ENCODE measurements at regions of chr14 and their contacts with region 1.

Region 1: GRCh38 chr14:68780358-68781160 is 12.3 kb downstream of the ZFP36L1 start:
- DNase-seq: peak in 5 of 9 donors; percentile 26 to 39 (median 33)
- ATAC-seq: peak; percentile 31
- H3K4me3 ChIP-seq: peak overlapping the region; percentile 57
- H3K4me3 Mint-ChIP-seq: peak overlapping the region; percentile 74 to 87 (median 84)
- H3K27ac ChIP-seq: peak overlapping the region; percentile 65
- H3K27ac Mint-ChIP-seq: peak overlapping the region; percentile 82 to 94 (median 92)
- H3K4me1 ChIP-seq: peaks cover 62 to 68% of the 10 kb centered on the region in 2 donors
- H3K4me1 Mint-ChIP-seq: peaks cover 39 to 90% (median 82%) of the 10 kb centered on the region in 7 donors
- H3K27me3 ChIP-seq: no peaks in the 10 kb centered on the region
- H3K27me3 Mint-ChIP-seq: no peaks in the 10 kb centered on the region

Region 2: GRCh38 chr14:68261092-68261842 is 519.3 kb before region 1 on chr14:
- CTCF ChIA-PET with region 1: interaction called, 219 read pairs
- POLR2A ChIA-PET with region 1: interaction called, 203 read pairs
- intact Hi-C with region 1: no loop called
- DNase-seq: peak in 4 of 9 donors; percentile 23 to 32 (median 29)
- ATAC-seq: peak; percentile 41
- H3K4me3 ChIP-seq: peak overlapping the region; percentile 10
- H3K4me3 Mint-ChIP-seq: peak overlapping the region in 9 of 10 donors; percentile 59 to 83 (median 75)
- H3K27ac ChIP-seq: peak overlapping the region; percentile 64
- H3K27ac Mint-ChIP-seq: peak overlapping the region; percentile 73 to 99 (median 92)
- H3K4me1 ChIP-seq: peaks cover 0 to 49% of the 10 kb centered on the region in 2 donors
- H3K4me1 Mint-ChIP-seq: peaks cover 41 to 85% (median 80%) of the 10 kb centered on the region in 7 donors
- H3K27me3 ChIP-seq: no peaks in the 10 kb centered on the region
- H3K27me3 Mint-ChIP-seq: no peaks in the 10 kb centered on the region

Region 3: GRCh38 chr14:68377459-68377858 is 403.1 kb before region 1 on chr14:
- CTCF ChIA-PET with region 1: no interaction called
- POLR2A ChIA-PET with region 1: interaction called, 14 read pairs
- intact Hi-C with region 1: no loop called
- DNase-seq: no peak
- ATAC-seq: peak; percentile 62
- H3K4me3 ChIP-seq: no peak overlapping the region
- H3K4me3 Mint-ChIP-seq: peak overlapping the region in 7 of 10 donors; percentile 29 to 72 (median 59)
- H3K27ac ChIP-seq: peak overlapping the region; percentile 37
- H3K27ac Mint-ChIP-seq: peak overlapping the region in 7 of 9 donors; percentile 69 to 89 (median 81)
- H3K4me1 ChIP-seq: peaks cover 0 to 38% of the 10 kb centered on the region in 2 donors
- H3K4me1 Mint-ChIP-seq: peaks cover 30 to 84% (median 72%) of the 10 kb centered on the region in 7 donors
- H3K27me3 ChIP-seq: no peaks in the 10 kb centered on the region
- H3K27me3 Mint-ChIP-seq: no peaks in the 10 kb centered on the region

Region 4: GRCh38 chr14:68482772-68483395 is 297.7 kb before region 1 on chr14:
- CTCF ChIA-PET with region 1: interaction called, 3 read pairs
- POLR2A ChIA-PET with region 1: no interaction called
- intact Hi-C with region 1: loop called (anchors 5 kb)
- DNase-seq: no peak
- ATAC-seq: no peak
- H3K4me3 ChIP-seq: no peak overlapping the region
- H3K4me3 Mint-ChIP-seq: peak overlapping the region in 9 of 10 donors; percentile 28 to 85 (median 39)
- H3K27ac ChIP-seq: no peak overlapping the region
- H3K27ac Mint-ChIP-seq: peak overlapping the region in 8 of 9 donors; percentile 71 to 96 (median 92)
- H3K4me1 ChIP-seq: peaks cover 22 to 48% of the 10 kb centered on the region in 2 donors
- H3K4me1 Mint-ChIP-seq: peaks cover 37 to 84% (median 79%) of the 10 kb centered on the region in 7 donors
- H3K27me3 ChIP-seq: no peaks in the 10 kb centered on the region
- H3K27me3 Mint-ChIP-seq: no peaks in the 10 kb centered on the region

Region 5: DNA sequence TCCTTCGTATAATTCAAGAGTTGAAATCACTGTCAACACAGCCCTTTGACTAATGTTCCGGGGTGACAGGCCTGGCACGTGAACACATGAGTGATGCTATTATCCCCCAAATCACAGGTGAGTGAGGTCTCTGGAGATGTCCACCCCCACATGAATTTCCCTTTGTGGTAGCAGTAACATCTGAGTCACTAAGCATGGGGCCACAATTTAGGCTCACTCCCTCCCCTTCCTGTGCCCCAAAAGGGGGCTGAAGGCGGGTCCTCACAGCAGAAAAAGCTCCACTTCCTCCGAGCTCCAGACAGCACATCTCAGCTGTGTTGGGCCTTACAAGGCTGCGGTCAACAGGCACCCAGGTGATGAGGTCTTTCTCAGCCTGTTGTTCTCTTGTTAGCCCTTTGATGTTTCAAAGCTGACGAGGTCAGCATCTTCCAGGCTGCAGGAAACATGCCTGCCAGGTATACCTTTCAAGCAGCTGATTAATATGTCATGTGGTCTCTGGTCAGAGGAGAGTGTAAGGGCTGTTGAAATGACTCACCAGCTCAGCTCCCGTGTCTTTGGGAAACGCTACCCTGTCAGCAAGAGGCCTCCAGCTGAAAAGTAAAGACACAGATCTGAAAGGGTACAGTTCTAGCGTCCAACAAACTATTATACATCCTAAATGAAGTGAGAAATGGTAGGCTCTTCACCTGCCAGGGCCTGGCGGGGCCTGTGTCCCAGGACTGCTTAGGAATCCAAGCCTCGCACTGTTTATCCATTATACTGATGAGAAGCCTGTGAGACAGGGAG is 94.9 kb before region 1 on chr14:
- CTCF ChIA-PET with region 1: interaction called, 3 read pairs
- POLR2A ChIA-PET with region 1: interaction called, 35 read pairs
- intact Hi-C with region 1: loop called (anchors 1 to 2 kb)
- DNase-seq: peak; percentile 31 to 74 (median 64)
- ATAC-seq: peak; percentile 91
- H3K4me3 ChIP-seq: no peak overlapping the region
- H3K4me3 Mint-ChIP-seq: peak overlapping the region; percentile 3 to 74 (median 48)
- H3K27ac ChIP-seq: peak overlapping the region; percentile 25
- H3K27ac Mint-ChIP-seq: peak overlapping the region; percentile 74 to 97 (median 91)
- H3K4me1 ChIP-seq: peaks cover 44 to 53% of the 10 kb centered on the region in 2 donors
- H3K4me1 Mint-ChIP-seq: peaks cover 52 to 74% (median 59%) of the 10 kb centered on the region in 7 donors
- H3K27me3 ChIP-seq: no peaks in the 10 kb centered on the region
- H3K27me3 Mint-ChIP-seq: no peaks in the 10 kb centered on the region

Region 6: GRCh38 chr14:68766299-68767230 is 14.0 kb before region 1 on chr14:
- CTCF ChIA-PET with region 1: interaction called, 3 read pairs
- POLR2A ChIA-PET with region 1: interaction called, 401 read pairs
- intact Hi-C with region 1: loop called in 1 of 2 experiments (anchors 2 kb)
- DNase-seq: no peak
- ATAC-seq: no peak
- H3K4me3 ChIP-seq: no peak overlapping the region
- H3K4me3 Mint-ChIP-seq: peak overlapping the region in 2 of 10 donors; percentile 30 to 68
- H3K27ac ChIP-seq: no peak overlapping the region
- H3K27ac Mint-ChIP-seq: peak overlapping the region in 1 of 9 donors; percentile 66
- H3K4me1 ChIP-seq: peaks cover 0 to 13% of the 10 kb centered on the region in 2 donors
- H3K4me1 Mint-ChIP-seq: peaks cover 26 to 50% (median 42%) of the 10 kb centered on the region in 7 donors
- H3K27me3 ChIP-seq: no peaks in the 10 kb centered on the region
- H3K27me3 Mint-ChIP-seq: no peaks in the 10 kb centered on the region

Region 7: DNA sequence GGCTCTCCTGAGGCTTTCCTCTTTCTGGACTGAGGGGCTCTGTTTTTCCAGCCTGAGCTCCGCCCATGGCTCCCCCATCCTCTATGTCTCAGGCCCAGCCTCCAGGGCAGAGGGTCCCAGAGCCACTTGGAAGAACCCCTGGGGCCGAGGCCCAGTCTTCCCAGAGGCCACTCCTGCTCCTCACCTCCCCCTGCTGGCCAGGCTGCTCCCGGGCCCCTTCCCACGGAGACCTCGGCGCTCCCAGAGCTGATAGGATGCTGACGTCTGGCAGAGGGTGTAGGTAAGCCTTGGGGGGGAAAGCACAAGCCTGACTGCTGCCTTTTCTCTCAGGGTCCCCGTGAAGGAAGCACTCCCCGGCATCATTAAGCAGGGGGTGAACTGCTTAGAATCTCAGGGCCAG is 566.2 kb after region 1 on chr14:
- CTCF ChIA-PET with region 1: no interaction called
- POLR2A ChIA-PET with region 1: no interaction called
- intact Hi-C with region 1: no loop called
- DNase-seq: no peak
- ATAC-seq: peak; percentile 20
- H3K4me3 ChIP-seq: no peak overlapping the region
- H3K4me3 Mint-ChIP-seq: no peak overlapping the region
- H3K27ac ChIP-seq: no peak overlapping the region
- H3K27ac Mint-ChIP-seq: no peak overlapping the region
- H3K4me1 ChIP-seq: no peaks in the 10 kb centered on the region
- H3K4me1 Mint-ChIP-seq: peaks cover 0 to 2% (median 0%) of the 10 kb centered on the region in 7 donors
- H3K27me3 ChIP-seq: no peaks in the 10 kb centered on the region
- H3K27me3 Mint-ChIP-seq: peaks cover 0 to 24% (median 4%) of the 10 kb centered on the region in 5 donors

Measured in naive thymus-derived CD4-positive, alpha-beta T cell (primary cell).